Dorsolateral prefrontal cortex (tissue), 120 donors: ENCODE measurements at regions of chr3 and their contacts with region 1.

Region 1: GRCh38 chr3:184017672-184018423 is at the start of gene ABCC5:
- DNase-seq: peak; percentile 91 to 97 (median 95)
- H3K4me3 ChIP-seq: peak within 1 kb of the TSS; percentile 55 to 100 (median 97)
- H3K27ac ChIP-seq: peak within 1 kb of the TSS; percentile 68 to 99 (median 94)
- H3K27me3 ChIP-seq: no peaks in the 10 kb centered on the region
- CTCF ChIP-seq: peak in 51 of 56 donors; percentile 8 to 79 (median 56)
- total RNA-seq, gene ABCC5: 66.9 to 160 (median 119) TPM

Region 2: GRCh38 chr3:183825456-183826161 is 192.2 kb before region 1 on chr3 and contains the start of gene MAP6D1:
- intact Hi-C with region 1: loop called in 1 of 2 experiments (anchors 5 kb)
- DNase-seq: peak; percentile 54 to 86 (median 74)
- H3K4me3 ChIP-seq: peak within 1 kb of the TSS; percentile 67 to 96 (median 86)
- H3K27ac ChIP-seq: peak within 1 kb of the TSS; percentile 80 to 100 (median 97)
- H3K27me3 ChIP-seq: no peaks in the 10 kb centered on the region
- CTCF ChIP-seq: peak in 53 of 56 donors; percentile 12 to 74 (median 51)
- total RNA-seq, gene MAP6D1: 22.2 to 201 (median 55.1) TPM

Region 3: GRCh38 chr3:184135149-184135910 is 117.5 kb after region 1 on chr3 and contains the start of gene EIF2B5:
- intact Hi-C with region 1: loop called (anchors 2 kb)
- DNase-seq: peak; percentile 89 to 97 (median 94)
- H3K4me3 ChIP-seq: peak within 1 kb of the TSS; percentile 66 to 99 (median 94)
- H3K27ac ChIP-seq: peak within 1 kb of the TSS; percentile 79 to 99 (median 95)
- H3K27me3 ChIP-seq: no peaks in the 10 kb centered on the region
- CTCF ChIP-seq: peak; percentile 55 to 90 (median 76)
- total RNA-seq, gene EIF2B5: 35.0 to 63.0 (median 44.9) TPM

Region 4: DNA sequence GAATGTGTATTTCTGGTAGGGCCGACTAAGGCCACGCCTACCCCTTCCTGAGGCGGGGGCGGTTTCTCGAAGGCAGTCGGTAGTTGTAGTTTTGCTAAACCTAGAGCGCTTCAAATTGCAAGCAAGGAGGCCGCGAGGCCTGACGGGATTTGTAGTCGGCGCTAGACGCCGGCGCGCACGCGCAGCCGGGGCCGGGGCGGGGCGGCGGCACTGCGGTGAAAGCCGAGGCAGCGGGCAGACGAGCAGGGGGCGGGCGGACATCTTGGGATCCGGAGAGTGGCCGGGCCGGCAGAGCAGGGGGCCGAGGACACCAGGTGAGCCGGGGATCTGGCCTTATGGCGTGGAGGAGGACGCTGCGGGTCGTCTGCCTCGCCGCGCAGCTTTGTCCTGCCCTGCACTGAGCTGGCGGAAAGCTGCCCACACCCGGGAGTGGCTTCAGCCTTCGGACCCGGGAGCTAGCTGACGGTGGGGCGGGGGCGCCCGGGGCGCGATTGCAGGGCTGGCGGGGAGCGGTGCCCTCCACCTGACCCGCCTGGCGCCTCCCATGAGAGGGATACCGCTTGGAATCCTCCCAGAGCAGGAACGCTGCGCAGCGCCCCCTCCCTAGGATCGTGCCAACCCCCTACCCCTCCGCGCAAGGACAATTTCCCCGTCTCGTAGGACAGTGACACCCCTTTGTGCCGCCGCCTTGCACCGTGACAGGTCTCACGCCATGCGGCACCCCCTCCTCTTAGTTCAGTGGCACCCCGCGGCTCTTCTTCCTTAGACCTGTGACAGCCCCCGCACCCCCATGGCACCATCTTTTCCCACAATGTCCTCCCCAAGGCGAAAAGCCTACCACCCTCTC is 157.0 kb after region 1 on chr3 and contains the start of gene AP2M1:
- intact Hi-C with region 1: loop called in 1 of 2 experiments (anchors 2 kb)
- DNase-seq: peak; percentile 96 to 100 (median 99)
- H3K4me3 ChIP-seq: peak within 1 kb of the TSS; percentile 75 to 100 (median 99)
- H3K27ac ChIP-seq: peak within 1 kb of the TSS; percentile 61 to 99 (median 95)
- H3K27me3 ChIP-seq: no peaks in the 10 kb centered on the region
- CTCF ChIP-seq: peak in 23 of 56 donors; percentile 2 to 51 (median 18)
- total RNA-seq, gene AP2M1: 297 to 743 (median 543) TPM

Region 5: DNA sequence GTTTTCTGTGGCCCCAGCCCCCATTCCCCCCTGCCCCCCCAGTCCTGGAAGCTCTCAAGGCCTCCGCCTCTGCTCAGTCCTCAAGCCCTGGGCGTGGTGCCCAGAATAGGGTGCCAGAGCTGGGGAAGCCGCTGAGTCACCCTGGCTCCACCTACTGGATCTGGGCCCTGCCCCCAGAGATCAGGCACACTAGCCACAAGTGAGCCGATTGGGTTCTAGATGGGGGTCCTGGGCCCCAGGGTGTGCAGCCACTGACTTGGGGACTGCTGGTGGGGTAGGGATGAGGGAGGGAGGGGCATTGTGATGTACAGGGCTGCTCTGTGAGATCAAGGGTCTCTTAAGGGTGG is 302.2 kb after region 1 on chr3:
- intact Hi-C with region 1: loop called in 1 of 2 experiments (anchors 10 kb)
- DNase-seq: peak; percentile 85 to 98 (median 96)
- H3K4me3 ChIP-seq: peak overlapping the region in 37 of 59 donors; percentile 6 to 49 (median 26)
- H3K27ac ChIP-seq: peak overlapping the region in 57 of 59 donors; percentile 12 to 92 (median 83)
- H3K27me3 ChIP-seq: no peaks in the 10 kb centered on the region
- CTCF ChIP-seq: peak in 33 of 56 donors; percentile 8 to 52 (median 26)